K562 (cell line): ENCODE measurements at regions of chr4 and their contacts with region 1.

Region 1: DNA sequence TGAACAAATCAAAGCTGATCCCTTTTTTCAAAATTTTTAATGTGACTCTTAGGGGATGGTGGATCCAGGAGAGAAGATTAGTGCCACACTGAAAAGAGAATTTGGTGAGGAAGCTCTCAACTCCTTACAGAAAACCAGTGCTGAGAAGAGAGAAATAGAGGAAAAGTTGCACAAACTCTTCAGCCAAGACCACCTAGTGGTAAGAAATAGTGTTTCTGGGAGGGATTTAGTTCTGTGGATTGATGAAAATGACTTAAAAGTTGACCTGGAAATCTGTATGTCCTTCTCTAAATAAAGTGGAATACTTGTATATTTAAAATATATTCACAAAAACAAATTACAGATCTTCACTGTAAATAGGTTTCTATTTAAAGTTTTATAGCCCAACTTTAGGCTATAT is 29.2 kb downstream of the NUDT9 start:
- DNase-seq: no peak
- ATAC-seq: no peak
- H3K4me3 ChIP-seq: no peak overlapping the region
- H3K27ac ChIP-seq: no peak overlapping the region
- H3K4me1 ChIP-seq: no peaks in the 10 kb centered on the region
- H3K27me3 ChIP-seq: no peaks in the 10 kb centered on the region
- CTCF ChIP-seq: no peak
- EP300 ChIP-seq: no peak
- POLR2A ChIP-seq: no peak
- RAD21 ChIP-seq: no peak

Region 2: GRCh38 chr4:86908251-86908657 is 543.3 kb before region 1 on chr4:
- CTCF ChIA-PET with region 1: no interaction called
- POLR2A ChIA-PET with region 1: no interaction called
- in situ Hi-C with region 1: loop called (anchors 10 kb)
- intact Hi-C with region 1: no loop called
- DNase-seq: no peak
- ATAC-seq: no peak
- H3K4me3 ChIP-seq: no peak overlapping the region
- H3K27ac ChIP-seq: no peak overlapping the region
- H3K4me1 ChIP-seq: peaks cover 5 to 10% of the 10 kb centered on the region in 2 experiments; a peak in 3 of 5 replicates
- H3K27me3 ChIP-seq: no peaks in the 10 kb centered on the region
- CTCF ChIP-seq: no peak
- EP300 ChIP-seq: no peak
- POLR2A ChIP-seq: no peak
- RAD21 ChIP-seq: no peak